Stomach (tissue), 19 donors: ENCODE measurements at regions of chr15 and their contacts with region 1.

Region 1: DNA sequence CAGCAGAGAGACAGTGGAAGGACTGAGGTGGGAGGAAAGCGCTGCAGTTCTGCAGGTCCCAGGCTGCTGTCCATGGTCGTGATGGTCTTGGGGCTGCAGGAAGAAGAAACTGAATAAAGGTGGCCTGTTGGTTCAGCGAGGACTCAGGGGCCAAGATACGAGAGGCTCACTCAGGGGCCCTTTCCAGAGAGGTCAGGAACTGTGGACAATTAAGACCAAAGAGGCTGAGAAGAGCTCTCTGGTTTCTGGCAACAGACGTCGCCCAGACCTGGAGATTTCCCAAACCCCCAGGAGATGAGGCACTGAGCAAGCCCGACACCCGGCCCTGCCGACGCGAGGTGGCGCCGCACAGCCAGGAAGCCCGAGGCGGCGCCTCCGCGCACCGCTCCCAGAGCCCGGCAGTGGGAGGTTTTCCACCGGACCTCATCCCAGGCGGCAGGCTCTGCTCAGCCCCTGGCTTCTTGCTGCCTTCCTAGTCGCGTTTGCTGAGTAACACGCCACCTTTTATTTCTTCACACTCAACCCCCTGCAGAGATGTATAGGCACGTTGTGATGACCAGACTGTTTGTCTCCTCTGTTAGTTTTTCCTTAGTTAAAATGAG is 56.4 kb upstream of the ARRDC4 start:
- DNase-seq: peak; percentile 73 to 92
- H3K4me3 ChIP-seq: no peak overlapping the region
- H3K27ac ChIP-seq: no peak overlapping the region
- H3K4me1 ChIP-seq: peaks cover 0 to 22% (median 9%) of the 10 kb centered on the region in 4 donors
- H3K27me3 ChIP-seq: peaks cover 0 to 74% (median 17%) of the 10 kb centered on the region in 3 donors
- CTCF ChIP-seq: peak in 5 of 7 experiments; percentile 17 to 66 (median 52)
- EP300 ChIP-seq: no peak
- POLR2A ChIP-seq: no peak

Region 2: DNA sequence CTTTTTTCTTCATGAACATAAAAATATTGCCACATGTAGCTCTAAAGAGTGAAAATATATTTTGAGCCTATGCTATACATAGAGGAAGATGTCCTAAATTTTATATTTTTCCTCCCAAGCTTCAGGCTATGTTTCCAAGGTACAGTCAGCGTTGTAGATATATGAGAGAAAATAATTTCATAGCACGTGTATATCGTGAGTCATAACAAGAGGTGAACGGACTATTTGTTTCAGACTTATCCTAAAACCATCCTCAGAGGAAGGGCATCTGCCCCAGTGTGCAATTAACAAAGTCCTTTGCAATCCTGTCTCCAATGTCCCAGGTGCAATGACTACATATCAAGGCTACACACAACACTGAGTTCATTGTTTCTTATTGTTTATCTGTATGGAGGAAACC is 120.8 kb before region 1 on chr15:
- intact Hi-C with region 1: no loop called
- DNase-seq: no peak
- H3K4me3 ChIP-seq: no peak overlapping the region
- H3K27ac ChIP-seq: no peak overlapping the region
- H3K4me1 ChIP-seq: no peaks in the 10 kb centered on the region
- H3K27me3 ChIP-seq: no peaks in the 10 kb centered on the region
- CTCF ChIP-seq: no peak
- EP300 ChIP-seq: no peak
- POLR2A ChIP-seq: no peak

Region 3: DNA sequence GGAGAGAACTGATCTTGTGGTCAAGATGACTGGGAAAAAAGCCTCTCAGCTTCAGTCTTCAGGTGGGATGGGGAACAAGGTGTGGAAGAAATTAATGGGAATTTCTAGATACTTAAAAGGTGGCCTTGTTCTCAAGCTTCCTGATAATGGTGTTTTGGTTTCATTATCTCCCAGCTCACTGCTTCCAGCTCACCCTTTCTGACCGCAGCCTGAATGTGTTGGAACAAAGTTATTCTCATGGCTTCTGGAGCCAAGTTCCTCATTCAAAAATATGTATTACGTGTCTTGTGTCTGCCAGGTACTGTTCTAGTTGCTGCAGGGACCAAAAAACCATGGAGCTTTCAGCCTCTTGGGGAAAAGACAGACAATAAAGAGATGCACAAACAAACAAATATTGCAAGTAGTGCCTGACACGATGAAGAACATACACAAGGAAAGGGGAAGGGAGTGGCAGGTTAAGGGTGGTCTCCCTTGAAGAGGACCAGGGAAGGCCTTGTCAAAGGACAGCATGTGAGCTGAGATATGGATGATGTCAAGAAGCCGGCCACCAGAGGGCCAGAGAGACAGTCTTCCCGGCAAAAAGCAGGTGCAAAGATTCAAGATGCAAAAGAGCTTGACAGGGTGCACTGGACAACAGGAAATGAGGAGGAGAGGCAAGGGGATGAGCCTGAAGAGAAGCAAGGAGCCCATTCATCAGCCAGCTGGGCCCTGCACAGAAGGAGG is 92.0 kb after region 1 on chr15:
- intact Hi-C with region 1: loop called (anchors 5 kb)
- DNase-seq: peak; percentile 37 to 43
- H3K4me3 ChIP-seq: peak overlapping the region in 1 of 4 donors; percentile 13
- H3K27ac ChIP-seq: peak overlapping the region in 3 of 5 donors; percentile 25 to 62 (median 52)
- H3K4me1 ChIP-seq: peaks cover 11 to 37% (median 20%) of the 10 kb centered on the region in 4 donors
- H3K27me3 ChIP-seq: no peaks in the 10 kb centered on the region
- CTCF ChIP-seq: peak in 1 of 7 experiments; percentile 37
- EP300 ChIP-seq: no peak
- POLR2A ChIP-seq: no peak

Region 4: GRCh38 chr15:98226578-98226977 is 322.5 kb after region 1 on chr15:
- intact Hi-C with region 1: no loop called
- DNase-seq: no peak
- H3K4me3 ChIP-seq: no peak overlapping the region
- H3K27ac ChIP-seq: no peak overlapping the region
- H3K4me1 ChIP-seq: no peaks in the 10 kb centered on the region
- H3K27me3 ChIP-seq: peaks cover 0 to 4% (median 0%) of the 10 kb centered on the region in 3 donors
- CTCF ChIP-seq: no peak
- EP300 ChIP-seq: no peak
- POLR2A ChIP-seq: no peak